ENCODE measurements at regions of chr4 and their contacts with region 1.

Region 1: GRCh38 chr4:27010334-27010940 is 149.8 kb downstream of the STIM2 start:
- ATAC-seq: peak in 4 of 8 experiments; percentile 38 to 83 (median 73)
- H3K4me3 ChIP-seq: no peak overlapping the region
- H3K27ac ChIP-seq: no peak overlapping the region
- H3K4me1 ChIP-seq: no peaks in the 10 kb centered on the region

Region 2: DNA sequence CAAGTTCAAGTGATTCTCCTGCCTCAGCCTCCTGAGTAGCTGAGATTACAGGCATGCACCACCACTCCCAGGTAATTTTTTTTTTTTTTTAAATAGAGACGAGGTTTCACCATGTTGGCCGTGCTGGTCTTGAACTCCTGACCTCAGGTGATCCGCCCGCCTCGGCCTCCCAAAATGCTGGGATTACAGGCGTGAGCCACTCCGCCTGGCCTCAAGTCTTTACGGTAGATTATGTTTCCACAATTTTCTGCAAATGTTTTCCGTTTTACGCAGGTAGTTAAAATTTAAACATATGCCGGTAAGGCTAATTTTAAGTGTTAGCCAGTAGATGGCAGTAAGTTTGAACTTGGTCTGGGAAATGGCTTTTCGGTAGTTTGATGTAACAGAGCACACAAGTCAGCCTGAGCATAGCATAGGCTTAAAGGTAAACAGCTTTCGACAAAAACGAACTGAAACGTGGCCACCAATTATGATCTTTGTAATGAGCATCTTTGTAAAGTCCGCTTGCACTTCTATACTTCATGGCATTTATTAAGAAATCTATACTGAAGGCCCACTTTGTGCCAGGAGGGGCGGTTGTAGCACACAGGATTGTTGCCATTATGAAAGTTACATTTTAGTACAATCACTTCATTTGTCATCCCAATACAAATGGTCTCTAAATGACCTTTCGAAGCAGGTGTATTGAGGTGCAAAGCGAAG is 551.2 kb before region 1 on chr4:
- in situ Hi-C with region 1: loop called in 2 of 9 experiments (anchors 25 kb)
- ATAC-seq: peak in 3 of 8 experiments; percentile 75 to 82 (median 78)
- H3K4me3 ChIP-seq: no peak overlapping the region
- H3K27ac ChIP-seq: no peak overlapping the region
- H3K4me1 ChIP-seq: no peaks in the 10 kb centered on the region

Region 3: GRCh38 chr4:26787461-26788340 is 222.7 kb before region 1 on chr4:
- in situ Hi-C with region 1: loop called in 1 of 9 experiments (anchors 25 kb)
- ATAC-seq: peak in 7 of 8 experiments; percentile 12 to 88 (median 46)
- H3K4me3 ChIP-seq: no peak overlapping the region
- H3K27ac ChIP-seq: no peak overlapping the region
- H3K4me1 ChIP-seq: peaks cover 2 to 6% of the 10 kb centered on the region in 2 donors

Region 4: GRCh38 chr4:26860157-26860921 is 150.1 kb before region 1 on chr4 and contains the start of gene STIM2:
- in situ Hi-C with region 1: loop called in 2 of 9 experiments (anchors 25 kb)
- ATAC-seq: peak; percentile 64 to 83 (median 80)
- H3K4me3 ChIP-seq: peak within 1 kb of the TSS; percentile 60 to 79 (median 68)
- H3K27ac ChIP-seq: peak within 1 kb of the TSS; percentile 78 to 83
- H3K4me1 ChIP-seq: peaks cover 19 to 33% of the 10 kb centered on the region in 2 donors
- total RNA-seq, gene STIM2: 17.6 to 36.8 (median 28.2) TPM

Measured in motor neuron (in vitro differentiated cells).